ENCODE measurements at regions of chr17 and their contacts with region 1.

Region 1: DNA sequence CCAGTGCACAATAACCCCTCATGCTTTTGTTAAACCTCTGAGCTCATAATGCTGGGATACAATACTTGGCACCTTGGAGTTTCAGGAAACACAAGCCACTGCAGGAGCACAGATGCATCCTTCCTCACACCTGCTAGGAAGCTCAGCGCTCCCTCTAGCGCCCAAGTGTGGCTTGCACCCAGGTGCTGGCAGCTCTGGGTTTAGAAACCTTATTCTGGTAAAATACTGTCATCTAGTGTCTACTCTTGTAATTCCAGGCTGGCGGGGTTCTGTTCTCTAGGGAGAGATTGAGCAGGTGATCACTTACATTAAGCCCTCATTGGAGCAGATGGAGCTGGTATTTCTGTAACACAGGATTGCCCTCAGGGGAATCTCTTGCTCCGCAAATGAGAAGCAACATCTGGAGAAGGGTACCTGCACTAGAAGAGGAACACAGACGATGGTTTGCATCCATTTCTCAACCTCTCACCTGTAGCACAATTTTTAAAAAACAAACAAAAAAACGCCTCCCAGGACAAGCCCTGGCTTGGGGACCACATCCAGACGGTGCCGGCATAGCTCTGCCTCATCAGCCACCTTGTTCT is 1.5 kb downstream of the CCL1 start:
- DNase-seq: no peak
- H3K4me3 ChIP-seq: no peak overlapping the region
- H3K27me3 ChIP-seq: peaks cover 4% of the 10 kb centered on the region; the same call in 1 of the 2 replicates
- CTCF ChIP-seq: peak; percentile 100

Region 2: GRCh38 chr17:34133350-34133749 is 228.2 kb before region 1 on chr17:
- CTCF ChIA-PET with region 1: no interaction called
- POLR2A ChIA-PET with region 1: no interaction called
- DNase-seq: no peak
- H3K4me3 ChIP-seq: no peak overlapping the region
- H3K27me3 ChIP-seq: no peaks in the 10 kb centered on the region
- CTCF ChIP-seq: no peak

Region 3: DNA sequence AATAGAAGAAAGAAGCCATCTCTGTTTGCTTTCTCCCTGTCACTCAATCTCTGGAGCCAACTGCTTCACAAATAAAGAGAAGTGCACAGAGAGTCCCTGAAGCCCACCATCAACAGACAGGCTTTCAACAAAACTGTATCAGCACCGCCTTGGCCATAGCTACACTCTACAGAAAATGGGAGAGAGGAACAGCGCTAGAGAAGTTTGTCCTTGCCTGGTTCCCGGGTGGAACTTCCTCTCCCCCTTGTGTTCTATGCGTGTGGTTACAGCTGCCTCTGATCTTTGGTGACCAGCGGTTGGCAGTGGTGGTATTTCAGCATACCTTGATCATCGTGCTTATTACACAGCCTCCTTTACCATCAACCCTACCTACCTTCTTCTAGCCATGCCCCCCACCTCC is 197.9 kb before region 1 on chr17:
- CTCF ChIA-PET with region 1: interaction called, 22 read pairs
- POLR2A ChIA-PET with region 1: no interaction called
- DNase-seq: no peak
- H3K4me3 ChIP-seq: no peak overlapping the region
- H3K27me3 ChIP-seq: peaks cover 14% of the 10 kb centered on the region
- CTCF ChIP-seq: peak; percentile 51

Region 4: DNA sequence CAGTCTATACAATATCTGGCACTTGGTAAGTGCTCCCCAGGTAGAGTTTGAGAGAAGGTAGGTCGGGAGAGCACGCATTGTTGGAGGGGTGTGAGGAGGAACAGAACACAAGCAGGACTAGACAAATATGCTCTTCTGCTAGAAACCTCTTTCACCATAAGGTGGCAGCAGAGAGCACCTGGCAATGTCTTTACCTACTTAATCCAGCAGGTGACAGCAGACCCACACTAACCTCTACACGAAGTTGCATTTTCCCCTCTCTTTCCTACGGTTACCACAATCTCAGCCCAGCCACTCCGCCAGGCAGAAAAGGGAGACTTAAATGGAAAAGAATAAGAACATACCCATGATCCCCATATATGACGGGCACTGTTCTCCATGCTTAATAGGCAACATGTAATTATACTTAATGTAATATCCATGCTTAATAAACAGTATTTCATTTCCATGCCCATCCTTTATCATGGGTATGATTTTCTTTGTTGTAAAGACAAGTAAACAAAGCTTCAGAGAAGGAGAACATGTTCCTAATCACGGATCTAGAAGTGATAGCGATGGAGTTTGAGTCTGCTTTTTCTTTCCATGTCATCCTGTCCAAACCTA is 161.5 kb before region 1 on chr17:
- CTCF ChIA-PET with region 1: interaction called, 512 read pairs
- POLR2A ChIA-PET with region 1: no interaction called
- DNase-seq: no peak
- H3K4me3 ChIP-seq: no peak overlapping the region
- H3K27me3 ChIP-seq: no peaks in the 10 kb centered on the region
- CTCF ChIP-seq: peak; percentile 100

Region 5: DNA sequence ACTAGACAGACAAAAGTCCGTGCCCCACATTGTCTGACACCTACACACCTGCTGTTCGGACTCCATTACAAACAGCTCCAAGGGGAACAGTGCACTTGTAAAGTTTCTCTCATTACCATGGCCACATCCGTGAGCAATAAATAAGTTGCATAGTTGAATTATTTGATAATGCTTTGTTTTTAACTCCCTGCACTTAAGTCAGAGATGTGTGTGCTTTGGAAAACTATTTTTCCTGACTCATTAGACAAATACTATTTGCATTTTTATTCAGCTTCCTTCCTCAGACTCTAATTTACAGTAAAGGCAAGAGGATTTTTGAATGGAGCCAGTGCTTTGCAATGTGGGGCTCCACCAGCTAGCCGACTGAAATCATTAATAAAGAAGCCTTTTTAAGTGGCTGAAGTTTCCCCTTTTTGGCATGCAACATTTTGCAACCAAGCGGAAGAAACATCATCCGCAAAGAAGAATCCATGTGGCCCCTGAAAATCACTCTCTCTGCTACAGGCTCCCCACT is 113.0 kb before region 1 on chr17:
- CTCF ChIA-PET with region 1: interaction called, 34 read pairs
- POLR2A ChIA-PET with region 1: no interaction called
- DNase-seq: peak; percentile 94
- H3K4me3 ChIP-seq: no peak overlapping the region
- H3K27me3 ChIP-seq: no peaks in the 10 kb centered on the region
- CTCF ChIP-seq: no peak

Region 6: DNA sequence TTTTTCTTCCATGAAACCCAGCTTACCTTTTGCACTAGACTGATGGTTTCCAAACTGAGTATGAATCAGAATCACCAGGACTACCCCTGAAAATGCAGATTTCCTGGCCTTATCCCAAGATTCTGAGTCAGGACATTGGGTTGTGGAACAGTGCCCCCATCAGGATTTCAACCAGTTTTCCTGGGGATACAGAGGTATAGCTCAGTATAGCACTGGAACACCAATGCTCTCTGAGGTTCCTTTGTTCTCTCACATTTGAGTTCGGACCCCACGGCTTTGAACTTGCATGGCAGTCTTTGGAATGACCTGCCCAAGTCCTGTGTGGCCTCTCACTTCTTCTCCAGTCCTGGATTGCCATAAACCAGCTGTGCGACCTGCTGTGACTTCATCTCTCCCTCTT is 55.1 kb before region 1 on chr17:
- CTCF ChIA-PET with region 1: interaction called, 148 read pairs
- POLR2A ChIA-PET with region 1: no interaction called
- DNase-seq: no peak
- H3K4me3 ChIP-seq: no peak overlapping the region
- H3K27me3 ChIP-seq: no peaks in the 10 kb centered on the region
- CTCF ChIP-seq: peak; percentile 63

Measured in BJ (cell line).